Stomach (tissue), 19 donors: ENCODE measurements at regions of chr14 and their contacts with region 1.

Region 1: DNA sequence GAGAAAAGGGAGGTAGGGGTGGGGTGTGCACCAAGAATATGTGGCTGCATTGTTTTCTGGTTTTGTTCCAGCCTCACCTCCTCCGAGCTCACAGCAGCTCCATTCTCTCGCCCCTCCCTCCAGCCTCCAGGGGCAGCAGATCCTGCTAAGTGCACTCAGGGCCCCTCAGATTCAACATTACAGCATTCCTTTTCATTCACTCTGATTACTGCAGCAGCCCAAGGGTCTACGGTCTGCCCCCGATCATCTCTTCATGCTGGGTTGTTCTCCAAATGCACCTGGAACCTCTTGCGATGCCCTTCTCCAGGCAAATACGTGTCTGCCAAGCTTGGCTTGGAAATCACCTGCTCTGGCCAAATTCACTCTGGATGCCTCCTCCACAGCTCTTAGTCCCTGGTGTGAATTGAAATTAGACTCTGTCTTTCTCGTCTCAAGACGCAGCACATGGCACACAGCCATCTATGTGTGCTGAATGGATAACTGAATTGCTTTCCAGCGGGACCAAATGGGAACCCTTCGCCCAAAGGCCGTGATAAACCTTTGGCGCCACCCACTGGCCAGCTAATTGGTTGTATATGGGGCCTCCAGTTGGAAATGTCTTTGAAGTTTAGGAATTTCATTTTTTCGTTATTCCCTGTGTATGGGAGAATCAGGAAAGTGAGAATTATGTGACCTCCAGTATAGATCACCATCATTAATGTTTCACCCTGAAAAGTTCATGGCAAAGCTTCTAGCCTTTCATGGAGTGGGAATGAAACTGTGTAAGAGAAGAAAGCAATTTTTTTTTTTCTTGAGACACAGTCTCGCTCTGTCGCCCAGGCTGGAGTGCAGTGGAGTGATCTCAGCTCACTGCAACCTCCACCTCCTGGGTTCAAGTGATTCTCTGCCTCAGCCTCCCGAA is 9.6 kb upstream of the HSP90AA1 start:
- DNase-seq: peak; percentile 91 to 94
- H3K4me3 ChIP-seq: no peak overlapping the region
- H3K27ac ChIP-seq: no peak overlapping the region
- H3K4me1 ChIP-seq: peaks cover 0 to 9% (median 7%) of the 10 kb centered on the region in 4 donors
- H3K27me3 ChIP-seq: no peaks in the 10 kb centered on the region
- CTCF ChIP-seq: peak in 5 of 7 experiments; percentile 59 to 83 (median 77)
- EP300 ChIP-seq: no peak
- POLR2A ChIP-seq: no peak

Region 2: DNA sequence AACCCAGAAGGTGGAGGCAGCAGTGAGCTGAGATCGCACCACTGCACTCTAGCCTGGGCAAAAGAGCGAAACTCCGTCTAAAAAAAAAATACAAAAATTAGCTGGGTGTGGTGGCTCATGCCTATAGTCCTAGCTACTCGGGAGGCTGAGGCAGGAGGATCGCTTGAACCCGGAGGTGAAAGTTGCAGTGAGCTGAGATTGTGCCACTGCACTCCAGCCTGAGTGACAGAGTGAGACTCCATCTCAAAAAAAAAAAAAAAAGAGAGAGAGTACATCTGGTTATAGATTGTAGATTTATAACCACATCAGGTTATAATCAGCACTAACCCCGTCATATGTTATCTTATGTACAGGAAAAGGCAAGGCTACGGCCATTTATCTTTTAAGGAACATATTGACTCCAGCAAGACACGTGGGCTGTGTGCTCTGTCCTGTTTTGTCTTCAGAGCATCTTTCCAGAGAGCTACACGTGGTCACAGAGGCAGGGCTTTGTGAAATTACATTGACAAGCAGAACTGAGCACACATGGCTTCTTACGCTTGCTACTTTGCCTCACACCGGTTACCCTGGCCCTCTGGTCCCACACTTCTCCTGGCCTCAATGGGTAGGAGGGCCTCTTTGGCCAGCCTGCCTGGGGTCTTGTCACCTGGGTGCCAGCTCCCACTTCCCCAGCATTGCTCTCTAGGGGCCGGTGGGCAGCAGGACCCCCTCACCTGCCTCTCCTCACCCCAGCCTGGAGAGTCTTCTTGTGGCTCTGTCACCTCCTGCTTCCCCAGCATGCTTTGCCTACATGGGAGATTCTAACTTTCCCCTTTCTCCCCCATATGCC is 138.8 kb before region 1 on chr14:
- intact Hi-C with region 1: loop called (anchors 5 kb)
- DNase-seq: no peak
- H3K4me3 ChIP-seq: no peak overlapping the region
- H3K27ac ChIP-seq: peak overlapping the region in 1 of 5 donors; percentile 46
- H3K4me1 ChIP-seq: peaks cover 8 to 28% (median 15%) of the 10 kb centered on the region in 4 donors
- H3K27me3 ChIP-seq: no peaks in the 10 kb centered on the region
- CTCF ChIP-seq: no peak
- EP300 ChIP-seq: no peak
- POLR2A ChIP-seq: no peak

Region 3: GRCh38 chr14:102046343-102047278 is 49.9 kb before region 1 on chr14:
- intact Hi-C with region 1: loop called (anchors 5 kb)
- DNase-seq: peak; percentile 92 to 96
- H3K4me3 ChIP-seq: no peak overlapping the region
- H3K27ac ChIP-seq: peak overlapping the region in 3 of 5 donors; percentile 4 to 62 (median 47)
- H3K4me1 ChIP-seq: peaks cover 0 to 20% (median 11%) of the 10 kb centered on the region in 4 donors
- H3K27me3 ChIP-seq: no peaks in the 10 kb centered on the region
- CTCF ChIP-seq: peak in 5 of 7 experiments; percentile 24 to 71 (median 44)
- EP300 ChIP-seq: no peak
- POLR2A ChIP-seq: no peak